HepG2 (cell line): ENCODE measurements at regions of chr3 and their contacts with region 1.

Region 1: DNA sequence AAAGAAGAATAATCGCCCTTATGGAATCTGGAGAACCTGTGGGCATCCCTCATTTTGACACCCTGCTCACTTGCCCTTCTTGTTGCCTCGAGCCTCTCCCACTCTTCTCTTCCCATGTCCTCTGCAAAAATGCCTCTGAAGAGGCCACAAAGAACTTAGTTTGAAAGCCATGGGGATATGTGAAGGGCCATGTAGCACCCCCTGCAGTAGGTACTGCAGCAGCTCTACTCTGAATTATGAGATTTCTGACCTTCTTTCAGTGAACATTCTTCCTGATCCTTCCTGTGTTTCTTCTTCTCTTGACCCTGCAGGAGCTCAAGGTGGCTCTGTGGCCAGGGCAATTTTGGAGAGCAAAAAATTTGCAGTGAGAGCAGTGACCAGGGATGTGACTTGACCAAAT is 30.4 kb upstream of the TRA2B start:
- DNase-seq: no peak
- ATAC-seq: no peak
- H3K4me3 ChIP-seq: no peak overlapping the region
- H3K27ac ChIP-seq: peak overlapping the region; percentile 5
- H3K4me1 ChIP-seq: peaks cover 72% of the 10 kb centered on the region
- H3K27me3 ChIP-seq: no peaks in the 10 kb centered on the region
- CTCF ChIP-seq: peak; percentile 34; the same call in 1 of the 2 replicates
- EP300 ChIP-seq: no peak
- POLR2A ChIP-seq: no peak
- RAD21 ChIP-seq: peak; percentile 45; the same call in 1 of the 2 replicates

Region 2: DNA sequence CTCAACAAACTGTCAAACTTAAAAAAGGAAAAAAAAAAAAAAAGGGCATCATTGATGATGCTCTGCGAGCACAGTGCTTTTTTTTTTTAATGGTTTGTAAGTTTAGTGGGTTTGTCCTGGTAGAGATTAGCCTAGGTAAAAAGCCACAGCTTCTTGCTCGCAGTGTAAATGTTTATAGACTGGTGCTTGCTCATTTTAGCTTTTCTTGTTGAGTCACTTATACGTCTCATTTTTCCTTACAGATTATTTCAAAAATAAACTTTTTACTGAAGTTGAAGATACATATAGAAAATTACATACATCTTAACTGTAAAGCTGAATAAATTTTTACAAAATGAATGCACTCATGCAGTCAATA is 13.8 kb before region 1 on chr3:
- CTCF ChIA-PET with region 1: interaction called, 6 read pairs
- POLR2A ChIA-PET with region 1: interaction called, 30 read pairs
- in situ Hi-C with region 1: no loop called
- intact Hi-C with region 1: loop called (anchors 1 kb)
- DNase-seq: peak; percentile 36
- ATAC-seq: no peak
- H3K4me3 ChIP-seq: peak overlapping the region in 1 of 3 experiments; percentile 22; a peak in 1 of 6 replicates
- H3K27ac ChIP-seq: peak overlapping the region; percentile 82
- H3K4me1 ChIP-seq: peaks cover 46% of the 10 kb centered on the region
- H3K27me3 ChIP-seq: no peaks in the 10 kb centered on the region
- CTCF ChIP-seq: no peak
- EP300 ChIP-seq: no peak
- POLR2A ChIP-seq: no peak
- RAD21 ChIP-seq: no peak